Activated T-helper 2 cell treated with anti-CD3 and anti-CD28 coated beads, Interferon-gamma antibody, Interleukin-2, Interleukin-4, amounts not matched to agents 10 μg/mL and 5 μg/mL and 100 μg/mL, durations not matched to agents 14 hours and 24 hours and 36 hours (primary cell): ENCODE measurements at regions of chr20 and their contacts with region 1.

Region 1: DNA sequence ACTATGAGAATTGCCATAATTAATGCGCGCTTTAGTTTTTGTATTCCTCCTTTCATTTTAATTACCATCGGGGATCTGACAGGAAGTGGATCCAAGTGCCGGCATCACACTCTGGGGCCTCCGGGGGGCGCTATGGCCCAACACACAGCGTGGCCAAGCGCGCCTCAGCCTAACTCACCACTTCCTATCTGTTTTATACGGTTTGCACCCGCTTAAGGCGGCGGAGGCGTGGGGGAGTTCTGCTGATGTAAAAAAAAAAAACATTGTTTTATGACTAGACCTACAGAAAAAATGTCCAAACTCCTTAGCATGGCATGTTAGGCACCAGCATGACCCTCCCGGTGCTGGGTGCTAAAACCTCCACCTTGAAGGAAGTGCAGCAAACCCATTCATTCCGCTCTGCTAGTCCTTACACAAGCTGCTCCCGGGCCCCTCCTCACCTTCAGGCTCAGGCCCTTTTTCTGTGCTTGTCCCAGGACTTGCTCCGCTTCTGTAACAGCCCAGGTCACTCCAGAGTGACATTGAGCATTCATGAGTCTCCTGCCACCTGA is 4.5 kb upstream of the EBF4 start:
- DNase-seq: peak; percentile 75
- H3K4me3 Mint-ChIP-seq: peak overlapping the region; percentile 38
- H3K27ac Mint-ChIP-seq: peak overlapping the region; percentile 60
- H3K4me1 Mint-ChIP-seq: peaks cover 28% of the 10 kb centered on the region
- H3K27me3 Mint-ChIP-seq: peaks cover 32% of the 10 kb centered on the region

Region 2: DNA sequence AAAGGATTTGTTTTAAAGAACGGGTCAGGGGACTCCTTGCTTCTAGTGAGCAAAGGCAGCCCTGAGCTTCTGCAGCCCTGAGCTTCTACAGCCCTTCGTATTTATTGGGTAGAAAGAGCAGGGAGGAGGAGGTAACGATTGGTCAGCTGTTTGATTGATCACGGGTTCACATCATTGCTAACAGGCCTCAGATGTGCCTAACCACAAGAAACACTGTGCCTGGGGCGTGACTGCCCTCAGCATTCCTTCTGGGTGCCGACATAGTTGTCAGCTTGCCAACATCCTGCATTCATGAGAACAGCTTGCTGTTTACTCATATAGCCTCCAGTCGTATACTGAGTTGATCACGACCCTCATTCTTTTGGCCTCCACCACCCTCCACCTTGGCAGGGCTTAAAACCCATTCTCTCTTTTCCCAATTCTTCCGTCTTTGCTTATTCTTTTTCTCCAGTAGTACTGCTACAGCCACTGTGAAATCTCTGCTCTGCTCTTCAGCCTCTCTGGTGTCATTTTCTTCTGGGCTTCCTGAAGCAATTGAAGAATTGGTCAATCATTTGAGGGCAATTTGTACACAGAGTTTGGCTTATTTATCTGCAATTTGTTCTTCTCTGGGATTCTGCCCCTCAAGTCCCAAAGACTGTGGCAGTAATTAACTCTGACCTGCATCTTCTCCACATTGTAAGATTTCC is 61.1 kb before region 1 on chr20:
- intact Hi-C with region 1: no loop called
- DNase-seq: no peak
- H3K4me3 Mint-ChIP-seq: no peak overlapping the region
- H3K27ac Mint-ChIP-seq: no peak overlapping the region
- H3K4me1 Mint-ChIP-seq: no peaks in the 10 kb centered on the region
- H3K27me3 Mint-ChIP-seq: peaks cover 20% of the 10 kb centered on the region

Region 3: GRCh38 chr20:2742934-2743559 is 54.9 kb after region 1 on chr20:
- intact Hi-C with region 1: loop called (anchors 1 kb)
- DNase-seq: peak; percentile 59
- H3K4me3 Mint-ChIP-seq: peak overlapping the region; percentile 68
- H3K27ac Mint-ChIP-seq: peak overlapping the region; percentile 70
- H3K4me1 Mint-ChIP-seq: peaks cover 27% of the 10 kb centered on the region
- H3K27me3 Mint-ChIP-seq: peaks cover 17% of the 10 kb centered on the region

Region 4: GRCh38 chr20:2752567-2753460 is 64.7 kb after region 1 on chr20:
- intact Hi-C with region 1: loop called (anchors 1 kb)
- DNase-seq: peak; percentile 31
- H3K4me3 Mint-ChIP-seq: peak overlapping the region; percentile 77
- H3K27ac Mint-ChIP-seq: no peak overlapping the region
- H3K4me1 Mint-ChIP-seq: peaks cover 16% of the 10 kb centered on the region
- H3K27me3 Mint-ChIP-seq: peaks cover 54% of the 10 kb centered on the region

Region 5: DNA sequence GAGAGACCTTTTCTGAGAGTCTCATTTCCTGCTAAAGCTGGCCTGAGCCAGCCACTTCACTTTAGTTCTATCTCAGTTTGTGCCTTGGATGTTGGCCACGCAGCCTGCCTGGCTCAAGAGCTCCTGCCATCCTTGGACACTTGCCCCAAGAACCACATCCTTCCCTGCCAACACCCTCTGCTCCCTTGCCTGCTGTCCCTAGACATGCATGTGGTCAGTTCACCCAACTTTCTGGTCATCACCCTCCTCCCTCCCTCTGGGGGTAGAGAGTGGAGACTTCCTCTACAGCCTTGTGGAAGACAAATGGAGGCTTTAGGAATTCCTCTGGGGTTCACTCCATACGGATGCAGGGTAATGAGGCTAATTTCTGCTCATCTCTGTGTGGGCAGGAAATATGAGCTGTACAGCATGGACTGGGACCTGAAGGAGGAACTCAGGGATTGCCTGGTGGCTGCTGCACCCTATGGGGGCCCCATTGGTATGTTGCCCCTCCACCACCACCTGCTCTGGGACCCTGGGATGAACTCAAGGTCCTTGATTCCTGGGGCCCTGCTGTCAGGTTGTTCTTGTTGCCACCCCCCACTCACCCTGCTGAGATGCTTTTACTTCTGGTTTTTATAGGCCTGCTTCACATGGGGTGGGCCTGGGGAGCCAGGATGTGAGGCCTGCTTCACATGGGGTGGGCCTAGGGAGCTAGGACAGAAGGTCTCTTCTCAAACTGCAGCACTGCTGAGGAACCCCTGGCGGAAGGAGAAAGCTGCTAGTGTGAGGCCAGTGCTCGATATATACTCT is 171.4 kb after region 1 on chr20:
- intact Hi-C with region 1: loop called (anchors 10 kb)
- DNase-seq: no peak
- H3K4me3 Mint-ChIP-seq: no peak overlapping the region
- H3K27ac Mint-ChIP-seq: no peak overlapping the region
- H3K4me1 Mint-ChIP-seq: no peaks in the 10 kb centered on the region
- H3K27me3 Mint-ChIP-seq: no peaks in the 10 kb centered on the region

Region 6: DNA sequence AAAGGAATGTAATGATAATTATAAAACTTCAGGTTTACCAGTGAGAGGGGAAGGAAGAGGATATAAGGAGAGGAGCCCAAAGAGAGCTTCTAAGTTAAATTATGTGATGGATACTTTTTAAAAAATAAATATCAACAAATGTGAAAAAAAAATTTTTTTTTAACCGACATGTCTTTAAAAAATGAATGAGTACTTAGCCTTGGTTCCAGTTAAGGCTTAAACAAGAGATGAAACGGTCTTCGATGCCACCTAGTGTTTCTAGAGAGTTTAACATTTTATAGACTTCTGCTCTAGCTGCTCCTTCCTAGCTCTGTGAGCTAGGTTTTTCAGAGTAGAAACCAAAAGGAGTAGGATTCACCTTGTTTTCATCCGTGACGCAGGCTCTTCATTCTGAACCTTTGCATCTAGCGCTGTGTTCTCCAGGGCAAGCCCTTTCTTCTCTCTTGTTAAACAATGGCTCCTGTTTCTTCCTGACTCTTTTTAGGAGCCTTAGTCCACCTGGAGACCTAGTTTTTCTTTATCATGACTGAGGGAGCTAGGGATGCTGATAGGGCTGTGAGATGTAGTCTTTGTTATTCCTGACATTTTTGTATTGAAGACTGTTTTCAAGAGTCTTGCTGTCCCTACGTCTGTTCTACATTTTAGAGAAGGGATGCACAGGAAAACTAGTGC is 312.9 kb after region 1 on chr20:
- intact Hi-C with region 1: loop called (anchors 5 kb)
- DNase-seq: no peak
- H3K4me3 Mint-ChIP-seq: no peak overlapping the region
- H3K27ac Mint-ChIP-seq: peak overlapping the region; percentile 29
- H3K4me1 Mint-ChIP-seq: peaks cover 17% of the 10 kb centered on the region
- H3K27me3 Mint-ChIP-seq: no peaks in the 10 kb centered on the region